AG04450 (cell line): ENCODE measurements at regions of chr1 and their contacts with region 1.

Region 1: DNA sequence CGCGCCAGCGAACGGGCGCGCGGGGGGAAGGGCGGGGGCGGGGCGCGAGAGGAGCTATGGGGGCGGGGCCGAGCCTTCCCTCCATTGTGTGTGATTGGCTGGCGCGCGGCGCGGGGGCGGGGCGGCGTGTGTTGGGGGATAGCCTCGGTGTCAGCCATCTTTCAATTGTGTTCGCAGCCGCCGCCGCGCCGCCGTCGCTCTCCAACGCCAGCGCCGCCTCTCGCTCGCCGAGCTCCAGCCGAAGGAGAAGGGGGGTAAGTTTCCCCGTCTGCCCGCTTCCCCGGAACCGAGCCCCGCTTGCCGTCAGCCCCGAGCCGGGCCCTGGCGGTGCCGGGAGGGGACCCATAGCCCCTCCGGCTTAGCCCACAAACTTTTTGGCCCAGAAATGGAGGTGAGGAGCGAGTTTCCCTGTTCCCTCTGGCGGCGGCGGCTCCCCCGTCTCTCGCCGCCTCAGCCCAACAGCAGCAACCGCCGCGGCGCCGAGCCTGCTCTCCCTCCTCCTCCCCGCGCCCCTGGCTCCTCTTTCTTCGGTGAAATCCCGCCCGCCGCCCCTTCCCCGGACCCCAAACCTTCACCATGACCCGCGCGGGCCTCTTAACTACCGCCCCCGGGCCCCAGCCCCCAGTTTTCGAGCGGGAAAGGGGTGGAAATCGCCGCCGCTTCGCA is at the start of gene H3-3A:
- DNase-seq: peak; percentile 77
- H3K4me3 ChIP-seq: peak within 1 kb of the TSS; percentile 85
- H3K27ac ChIP-seq: peak within 1 kb of the TSS; percentile 99
- H3K27me3 ChIP-seq: no peaks in the 10 kb centered on the region
- CTCF ChIP-seq: 0 out of 2 replicates have a peak, but pooled peaks have one; percentile 11
- polyA plus RNA-seq, gene H3-3A: 260 and 330 TPM in 2 replicates

Region 2: DNA sequence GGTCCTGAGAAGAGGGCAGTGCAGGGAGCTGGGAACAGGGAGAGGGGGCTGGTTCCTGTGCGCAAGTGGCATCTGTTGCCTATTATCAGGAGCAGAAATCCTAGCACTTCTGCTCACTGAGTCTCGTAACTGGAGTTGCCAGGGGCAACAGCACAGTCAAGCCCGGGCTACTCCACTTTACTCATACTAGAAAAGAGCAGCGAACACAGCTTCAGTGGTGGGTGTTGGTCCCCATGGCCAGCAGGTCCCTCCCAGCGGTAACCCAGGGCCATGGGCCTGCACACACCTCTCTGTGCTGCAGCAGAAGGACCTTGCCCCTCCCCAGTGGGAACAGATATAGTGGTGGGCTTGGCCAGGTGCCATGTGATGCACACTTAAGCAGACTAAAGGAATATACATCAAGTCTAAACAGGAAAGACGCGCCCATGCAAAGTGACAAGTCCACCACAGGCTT is 147.1 kb before region 1 on chr1:
- CTCF ChIA-PET with region 1: no interaction called
- POLR2A ChIA-PET with region 1: no interaction called
- DNase-seq: no peak
- H3K4me3 ChIP-seq: no peak overlapping the region
- H3K27ac ChIP-seq: no peak overlapping the region
- H3K27me3 ChIP-seq: no peaks in the 10 kb centered on the region
- CTCF ChIP-seq: no peak

Region 3: GRCh38 chr1:225973158-225973557 is 89.5 kb before region 1 on chr1:
- CTCF ChIA-PET with region 1: no interaction called
- POLR2A ChIA-PET with region 1: no interaction called
- DNase-seq: no peak
- H3K4me3 ChIP-seq: no peak overlapping the region
- H3K27ac ChIP-seq: no peak overlapping the region
- H3K27me3 ChIP-seq: no peaks in the 10 kb centered on the region
- CTCF ChIP-seq: no peak

Region 4: GRCh38 chr1:226051356-226051755 is 11.3 kb before region 1 on chr1:
- CTCF ChIA-PET with region 1: interaction called, 37 read pairs
- POLR2A ChIA-PET with region 1: interaction called, 18 read pairs
- DNase-seq: no peak
- H3K4me3 ChIP-seq: no peak overlapping the region
- H3K27ac ChIP-seq: no peak overlapping the region
- H3K27me3 ChIP-seq: peaks cover 2% of the 10 kb centered on the region
- CTCF ChIP-seq: no peak

Region 5: GRCh38 chr1:226092965-226093364 is 30.3 kb after region 1 on chr1:
- CTCF ChIA-PET with region 1: interaction called, 20 read pairs
- POLR2A ChIA-PET with region 1: interaction called, 6 read pairs
- DNase-seq: no peak
- H3K4me3 ChIP-seq: no peak overlapping the region
- H3K27ac ChIP-seq: peak overlapping the region; percentile 21
- H3K27me3 ChIP-seq: peaks cover 6% of the 10 kb centered on the region
- CTCF ChIP-seq: no peak

Region 6: DNA sequence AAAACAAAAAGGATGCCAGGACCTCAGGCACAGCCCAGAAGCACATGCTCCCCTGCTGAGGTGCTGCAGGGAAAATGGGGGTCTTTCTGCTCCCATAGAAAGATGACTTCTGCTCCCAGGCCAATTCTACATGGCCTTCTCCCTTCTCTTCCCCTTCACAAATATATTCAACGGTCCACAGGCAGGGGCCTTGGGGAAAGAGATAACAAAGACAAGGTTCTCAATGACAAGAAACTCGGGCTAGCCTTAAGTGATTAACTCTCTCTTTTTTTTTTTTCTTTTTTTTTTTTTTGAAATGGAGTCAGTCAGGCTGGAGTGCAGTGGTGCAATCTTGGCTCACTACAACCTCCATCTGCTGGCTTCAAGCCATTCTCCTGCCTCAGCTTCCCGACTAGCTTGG is 54.0 kb after region 1 on chr1:
- CTCF ChIA-PET with region 1: interaction called, 52 read pairs
- POLR2A ChIA-PET with region 1: interaction called, 5 read pairs
- DNase-seq: no peak
- H3K4me3 ChIP-seq: no peak overlapping the region
- H3K27ac ChIP-seq: no peak overlapping the region
- H3K27me3 ChIP-seq: peaks cover 3% of the 10 kb centered on the region
- CTCF ChIP-seq: no peak

Region 7: GRCh38 chr1:226186124-226187018 is 123.7 kb after region 1 on chr1 and contains the start of gene ACBD3:
- CTCF ChIA-PET with region 1: interaction called, 10 read pairs
- POLR2A ChIA-PET with region 1: no interaction called
- DNase-seq: peak; percentile 55
- H3K4me3 ChIP-seq: peak within 1 kb of the TSS; percentile 97
- H3K27ac ChIP-seq: peak within 1 kb of the TSS; percentile 65
- H3K27me3 ChIP-seq: no peaks in the 10 kb centered on the region
- CTCF ChIP-seq: no peak; the same call in 1 of the 2 replicates
- polyA plus RNA-seq, gene ACBD3: 49.6 and 63.0 TPM in 2 replicates

Region 8: GRCh38 chr1:226209307-226210059 is 146.8 kb after region 1 on chr1:
- CTCF ChIA-PET with region 1: no interaction called
- POLR2A ChIA-PET with region 1: no interaction called
- DNase-seq: no peak
- H3K4me3 ChIP-seq: no peak overlapping the region
- H3K27ac ChIP-seq: no peak overlapping the region
- H3K27me3 ChIP-seq: peaks cover 27% of the 10 kb centered on the region
- CTCF ChIP-seq: no peak